Mammary epithelial cell (primary cell): ENCODE measurements at regions of chr13 and their contacts with region 1.

Region 1: DNA sequence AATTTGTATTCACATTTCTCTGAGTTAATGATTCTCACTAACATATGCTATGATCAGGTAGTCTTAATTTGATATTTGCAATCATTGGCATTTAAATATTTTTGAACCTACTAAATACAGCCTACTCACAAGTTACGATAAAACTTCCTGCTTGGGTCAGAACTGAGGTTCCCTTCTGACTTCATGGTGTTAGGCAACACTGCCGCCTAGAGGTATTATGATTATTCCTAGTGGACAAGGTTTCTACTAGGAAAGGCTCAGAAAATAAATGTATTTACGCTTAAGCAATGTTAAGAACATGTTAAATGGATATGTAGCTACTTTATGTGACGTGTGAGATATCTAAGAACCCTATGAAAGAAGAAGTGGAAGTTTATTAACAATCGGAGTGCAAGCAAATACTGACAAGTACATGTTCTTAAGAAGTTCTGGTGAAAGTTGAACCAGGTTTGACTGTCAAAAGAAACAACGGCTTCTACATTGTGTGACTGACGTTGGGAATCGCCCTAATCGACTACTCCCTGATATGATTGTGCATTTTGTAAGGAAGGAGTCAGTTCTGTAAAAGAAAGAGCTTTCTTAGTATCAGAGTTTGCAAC is 1395.8 kb downstream of the SLITRK5 start:
- DNase-seq: peak; percentile 19
- H3K4me3 ChIP-seq: no peak overlapping the region
- H3K27ac ChIP-seq: no peak overlapping the region
- H3K4me1 ChIP-seq: no peaks in the 10 kb centered on the region
- H3K27me3 ChIP-seq: no peaks in the 10 kb centered on the region
- CTCF ChIP-seq: peak; percentile 72 to 84

Region 2: DNA sequence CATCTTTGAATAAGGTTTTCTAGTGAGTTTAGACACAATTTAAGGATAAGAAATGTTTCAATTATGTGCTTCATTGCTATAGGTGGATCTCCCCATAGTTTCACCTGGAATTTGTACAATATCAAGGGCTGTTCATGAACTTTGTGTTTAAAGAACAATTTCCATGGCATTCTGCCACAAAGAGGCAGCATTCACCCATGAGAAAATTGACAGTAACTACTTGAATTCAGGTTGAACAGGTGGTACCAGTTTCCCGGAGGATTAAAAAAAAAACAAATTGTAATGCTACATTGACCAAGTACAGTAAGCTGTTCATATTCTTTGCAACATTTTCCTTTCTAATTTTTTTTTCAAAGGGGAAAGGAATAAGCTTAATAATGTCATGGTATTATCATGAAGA is 1386.7 kb before region 1 on chr13:
- CTCF ChIA-PET with region 1: no interaction called
- dilution Hi-C with region 1: no loop called
- in situ Hi-C with region 1: no loop called
- intact Hi-C with region 1: loop called (anchors 5 kb)
- DNase-seq: no peak
- H3K4me3 ChIP-seq: no peak overlapping the region
- H3K27ac ChIP-seq: no peak overlapping the region
- H3K4me1 ChIP-seq: peaks cover 14% of the 10 kb centered on the region
- H3K27me3 ChIP-seq: peaks cover 25% of the 10 kb centered on the region
- CTCF ChIP-seq: peak in 1 of 2 donors; percentile 21

Region 3: DNA sequence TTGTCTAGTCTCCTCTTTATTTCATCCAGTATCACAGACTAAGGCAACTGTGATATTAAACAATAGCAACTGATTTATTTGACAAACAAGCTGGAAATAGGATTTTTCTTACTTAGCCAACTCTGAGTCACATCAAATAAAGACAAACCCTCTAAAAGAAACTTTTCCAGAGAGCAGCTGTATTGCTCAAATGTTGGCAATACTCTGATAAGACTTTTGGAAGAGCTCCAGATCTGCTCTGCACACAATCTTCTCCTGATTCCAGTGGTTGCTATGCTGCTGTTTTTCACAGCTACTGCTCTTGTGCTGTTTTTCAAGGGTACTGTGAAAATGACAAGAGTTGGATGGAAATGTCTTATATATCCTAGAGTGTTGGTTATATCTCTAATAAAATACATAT is 83.4 kb after region 1 on chr13:
- CTCF ChIA-PET with region 1: no interaction called
- dilution Hi-C with region 1: no loop called
- in situ Hi-C with region 1: no loop called
- intact Hi-C with region 1: no loop called
- DNase-seq: no peak
- H3K4me3 ChIP-seq: no peak overlapping the region
- H3K27ac ChIP-seq: no peak overlapping the region
- H3K4me1 ChIP-seq: no peaks in the 10 kb centered on the region
- H3K27me3 ChIP-seq: no peaks in the 10 kb centered on the region
- CTCF ChIP-seq: no peak